ENCODE measurements at regions of chr5 and their contacts with region 1.

Region 1: GRCh38 chr5:5192681-5193080 is 52.6 kb downstream of the ADAMTS16 start:
- DNase-seq: no peak
- H3K4me3 ChIP-seq: no peak overlapping the region
- H3K27ac ChIP-seq: no peak overlapping the region
- H3K4me1 ChIP-seq: no peaks in the 10 kb centered on the region
- H3K27me3 ChIP-seq: no peaks in the 10 kb centered on the region
- CTCF ChIP-seq: no peak
- EP300 ChIP-seq: no peak
- POLR2A ChIP-seq: no peak

Region 2: GRCh38 chr5:5178136-5178535 is 14.5 kb before region 1 on chr5:
- in situ Hi-C with region 1: no loop called
- intact Hi-C with region 1: loop called (anchors 1 kb)
- DNase-seq: no peak
- H3K4me3 ChIP-seq: no peak overlapping the region
- H3K27ac ChIP-seq: no peak overlapping the region
- H3K4me1 ChIP-seq: no peaks in the 10 kb centered on the region
- H3K27me3 ChIP-seq: no peaks in the 10 kb centered on the region
- CTCF ChIP-seq: no peak
- EP300 ChIP-seq: no peak
- POLR2A ChIP-seq: no peak